Posterior vena cava (tissue), 2 donors: ENCODE measurements at regions of chr17 and their contacts with region 1.

Region 1: GRCh38 chr17:42422958-42423712 is at the start of gene CAVIN1:
- DNase-seq: peak; percentile 99
- total RNA-seq, gene CAVIN1: 733 to 737 TPM

Region 2: DNA sequence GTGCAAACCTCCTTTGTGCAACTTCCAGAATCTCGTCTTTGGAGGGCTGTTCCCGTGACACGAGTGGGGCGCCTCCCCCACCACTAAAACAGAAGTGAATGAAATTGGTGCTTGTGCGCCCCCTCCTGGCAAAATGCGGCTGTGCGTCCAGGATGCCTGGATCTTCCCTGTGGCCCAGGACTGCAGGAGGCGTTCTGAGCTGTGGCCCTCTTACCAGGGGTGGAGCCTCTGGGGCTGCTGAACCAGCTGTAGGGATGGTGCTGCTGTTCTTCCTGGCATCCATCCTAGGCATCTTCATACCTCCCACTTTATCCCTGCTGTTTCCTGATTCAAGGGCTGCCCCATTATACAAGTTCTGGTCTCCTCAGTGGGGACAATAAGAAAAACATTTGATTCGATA is 94.4 kb after region 1 on chr17:
- intact Hi-C with region 1: loop called in 1 of 2 experiments (anchors 5 kb)
- DNase-seq: peak; percentile 97

Region 3: GRCh38 chr17:42709561-42709960 is 286.4 kb after region 1 on chr17:
- intact Hi-C with region 1: no loop called
- DNase-seq: peak; percentile 19